Ovary (tissue), 10 donors: ENCODE measurements at regions of chr7 and their contacts with region 1.

Region 1: GRCh38 chr7:38796626-38797501 is 112.1 kb downstream of the VPS41 start:
- DNase-seq: peak; percentile 9 to 52 (median 40)
- H3K4me3 ChIP-seq: no peak overlapping the region
- H3K27ac ChIP-seq: no peak overlapping the region
- H3K4me1 ChIP-seq: no peaks in the 10 kb centered on the region
- H3K27me3 ChIP-seq: no peaks in the 10 kb centered on the region
- CTCF ChIP-seq: peak; percentile 52 to 75 (median 66)
- EP300 ChIP-seq: no peak
- POLR2A ChIP-seq: no peak

Region 2: DNA sequence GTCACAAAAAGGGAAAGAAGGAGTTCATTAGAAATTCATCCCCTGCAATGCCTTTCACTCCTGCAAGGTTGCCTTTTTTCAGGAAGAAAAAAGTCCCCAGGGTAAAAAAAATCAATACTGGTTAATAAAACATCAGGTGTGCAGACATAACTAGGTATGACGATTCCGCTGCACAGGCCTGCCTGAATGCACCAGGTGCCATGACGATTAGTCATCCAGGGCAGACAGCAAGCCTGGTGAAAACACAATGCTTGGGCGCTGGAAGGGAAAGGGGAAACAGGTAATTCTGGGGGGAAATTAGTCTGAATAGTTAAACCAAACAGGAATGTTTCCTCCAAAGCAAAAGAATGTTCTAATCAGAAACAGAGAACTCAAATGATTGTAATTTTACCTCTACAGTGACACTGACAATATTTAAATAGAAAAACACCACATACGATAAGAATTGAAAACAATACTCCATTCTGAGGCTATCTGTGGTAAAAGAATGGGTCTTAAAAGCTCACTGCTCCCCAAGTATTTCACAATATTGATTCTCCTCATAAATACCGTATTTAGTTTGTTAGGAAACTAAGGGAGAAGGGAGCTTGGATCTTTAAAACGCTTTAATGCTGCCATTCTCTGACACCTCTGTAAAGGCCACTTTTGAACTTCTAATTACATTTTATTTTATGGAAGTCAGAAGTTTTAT is 66.9 kb after region 1 on chr7:
- intact Hi-C with region 1: loop called in 1 of 4 experiments (anchors 10 kb)
- DNase-seq: no peak
- H3K4me3 ChIP-seq: no peak overlapping the region
- H3K27ac ChIP-seq: no peak overlapping the region
- H3K4me1 ChIP-seq: no peaks in the 10 kb centered on the region
- H3K27me3 ChIP-seq: no peaks in the 10 kb centered on the region
- CTCF ChIP-seq: no peak
- EP300 ChIP-seq: no peak
- POLR2A ChIP-seq: no peak

Region 3: DNA sequence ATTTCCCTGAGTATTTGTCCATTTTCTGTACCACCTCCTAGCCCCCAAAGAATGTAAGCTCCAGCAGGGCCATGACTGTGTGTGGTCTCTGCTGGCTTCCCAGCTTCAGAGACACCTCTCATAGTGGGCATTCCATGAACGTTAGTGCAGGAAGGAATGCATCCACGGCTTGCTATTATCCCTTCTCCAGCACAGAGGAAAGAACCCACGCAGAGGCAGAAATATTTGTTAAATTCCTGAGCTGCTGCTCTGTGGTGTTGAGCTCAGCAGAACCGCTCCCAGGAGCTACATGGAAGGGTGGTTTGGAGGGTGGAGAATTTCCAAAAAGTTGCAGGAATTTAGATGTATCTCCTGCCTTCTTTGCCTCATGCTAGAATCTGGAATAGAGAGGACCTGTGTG is 456.1 kb after region 1 on chr7:
- intact Hi-C with region 1: loop called in 1 of 4 experiments (anchors 5 kb)
- DNase-seq: no peak
- H3K4me3 ChIP-seq: no peak overlapping the region
- H3K27ac ChIP-seq: no peak overlapping the region
- H3K4me1 ChIP-seq: no peaks in the 10 kb centered on the region
- H3K27me3 ChIP-seq: no peaks in the 10 kb centered on the region
- CTCF ChIP-seq: no peak
- EP300 ChIP-seq: no peak
- POLR2A ChIP-seq: no peak

Region 4: DNA sequence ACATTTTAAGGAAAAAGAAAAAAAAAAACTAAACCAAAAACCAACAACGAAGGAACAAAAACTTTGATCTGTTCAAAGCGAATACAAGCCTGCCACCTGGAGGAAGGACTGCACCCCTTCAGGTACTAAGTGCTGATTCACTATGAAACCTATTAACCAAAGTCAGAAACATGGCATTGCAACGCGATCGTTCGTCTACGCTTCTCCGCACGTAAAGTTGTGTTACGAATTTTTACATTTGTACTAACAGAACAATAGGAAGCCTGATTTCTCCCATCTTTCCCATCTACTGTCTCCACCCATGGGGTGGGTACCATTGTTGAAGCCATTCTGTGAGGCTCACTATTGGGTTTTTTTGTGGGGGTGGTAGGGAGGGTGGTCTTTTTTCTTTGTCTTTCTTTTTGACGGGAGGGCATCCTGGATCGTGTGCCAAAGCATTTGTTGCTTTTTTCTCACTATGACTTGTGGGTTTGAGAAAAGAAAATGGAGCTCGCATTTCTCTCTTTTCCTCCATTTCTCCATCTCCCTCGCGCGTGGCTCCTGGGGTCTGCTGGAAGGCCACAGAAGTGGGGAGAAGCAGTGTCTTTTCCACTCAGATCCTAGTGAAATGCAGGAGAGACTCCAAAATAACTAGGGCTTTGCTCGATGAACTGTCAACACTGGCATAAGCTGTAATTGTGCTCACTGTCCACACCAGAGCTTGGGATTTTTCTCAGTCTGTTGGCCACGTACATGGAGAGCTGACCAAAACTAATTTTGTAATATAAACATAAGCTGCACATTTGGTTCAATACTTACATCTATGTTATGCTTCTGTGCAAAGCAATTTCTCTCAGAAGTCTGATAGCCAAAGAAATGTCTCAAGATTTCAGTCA is 668.4 kb after region 1 on chr7:
- intact Hi-C with region 1: loop called in 1 of 4 experiments (anchors 10 kb)
- DNase-seq: peak; percentile 26 to 41 (median 33)
- H3K4me3 ChIP-seq: no peak overlapping the region
- H3K27ac ChIP-seq: no peak overlapping the region
- H3K4me1 ChIP-seq: no peaks in the 10 kb centered on the region
- H3K27me3 ChIP-seq: no peaks in the 10 kb centered on the region
- CTCF ChIP-seq: peak; percentile 8 to 53 (median 31)
- EP300 ChIP-seq: no peak
- POLR2A ChIP-seq: no peak

Region 5: GRCh38 chr7:39510864-39511354 is 714.0 kb after region 1 on chr7:
- intact Hi-C with region 1: loop called in 2 of 4 experiments (anchors 5 to 10 kb)
- DNase-seq: no peak
- H3K4me3 ChIP-seq: no peak overlapping the region
- H3K27ac ChIP-seq: no peak overlapping the region
- H3K4me1 ChIP-seq: no peaks in the 10 kb centered on the region
- H3K27me3 ChIP-seq: no peaks in the 10 kb centered on the region
- CTCF ChIP-seq: no peak
- EP300 ChIP-seq: no peak
- POLR2A ChIP-seq: no peak

Region 6: DNA sequence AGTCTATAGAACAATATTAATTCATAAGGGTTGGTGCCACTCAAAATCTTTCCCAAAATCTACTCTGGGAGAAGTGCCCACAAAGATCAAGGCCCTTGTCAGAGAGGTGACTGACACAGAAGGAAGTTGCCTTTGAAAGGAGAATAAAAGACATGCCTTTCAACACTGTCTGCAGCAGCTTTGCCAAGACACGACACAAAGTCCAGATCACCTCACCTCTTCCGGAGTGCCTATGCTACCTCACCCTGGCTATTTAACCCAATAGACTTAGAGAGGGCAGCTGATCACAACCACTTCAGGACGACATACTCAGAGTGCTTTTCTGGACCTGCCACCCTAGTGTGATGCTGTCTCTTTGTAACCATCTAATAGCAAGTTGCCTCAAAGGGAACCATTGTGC is 720.4 kb after region 1 on chr7:
- intact Hi-C with region 1: loop called in 2 of 4 experiments (anchors 5 to 10 kb)
- DNase-seq: no peak
- H3K4me3 ChIP-seq: no peak overlapping the region
- H3K27ac ChIP-seq: no peak overlapping the region
- H3K4me1 ChIP-seq: no peaks in the 10 kb centered on the region
- H3K27me3 ChIP-seq: no peaks in the 10 kb centered on the region
- CTCF ChIP-seq: no peak
- EP300 ChIP-seq: no peak
- POLR2A ChIP-seq: no peak